ENCODE measurements at regions of chr7 and their contacts with region 1.

Region 1: DNA sequence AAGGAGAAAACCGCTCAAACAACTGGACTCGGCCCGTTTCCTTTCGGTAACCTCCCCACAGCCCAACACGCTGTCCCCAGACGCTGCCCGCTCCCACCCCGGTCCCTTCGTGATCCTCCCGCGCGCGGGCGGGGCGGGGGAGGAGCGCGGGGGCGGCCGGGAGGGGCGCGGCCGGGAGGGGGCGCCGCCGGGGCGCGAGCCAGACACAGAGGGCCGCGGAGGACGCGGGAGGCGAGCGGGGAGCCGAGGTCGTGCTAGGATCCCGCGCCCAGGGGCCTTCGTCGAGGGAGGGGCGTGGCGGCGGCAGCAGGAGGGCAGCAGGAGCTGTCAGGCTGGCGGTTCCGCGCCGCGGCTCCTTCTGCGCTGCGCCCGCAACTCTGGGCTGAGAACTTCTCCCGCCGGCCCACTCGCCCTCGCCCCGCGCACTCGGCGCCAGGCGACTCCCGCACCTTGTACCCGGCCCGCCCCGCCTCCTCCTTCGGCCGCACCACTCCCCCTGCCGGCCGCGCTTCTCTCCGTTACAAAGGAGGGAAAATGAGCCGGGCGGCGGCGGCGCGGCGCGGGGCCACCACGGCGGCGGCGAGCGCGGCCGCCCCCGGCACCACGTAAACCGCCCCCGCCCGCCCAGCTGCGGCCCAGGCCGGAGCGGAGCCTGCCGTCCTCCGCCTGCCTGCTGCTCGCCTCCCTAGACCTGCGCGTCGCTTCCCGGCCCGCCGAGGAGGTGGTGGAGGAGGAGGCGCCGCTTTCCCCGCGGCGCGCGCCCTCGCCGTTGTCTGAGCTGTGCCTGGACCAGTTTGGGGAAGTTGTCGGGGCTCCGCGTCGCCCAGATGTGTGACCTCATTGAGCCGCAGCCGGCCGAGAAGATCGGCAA is at the start of gene CDK14:
- DNase-seq: peak; percentile 93
- ATAC-seq: peak; percentile 68
- H3K4me3 ChIP-seq: peak within 1 kb of the TSS; percentile 72 to 91 (median 84)
- H3K4me3 Mint-ChIP-seq: peak within 1 kb of the TSS; percentile 100
- H3K27ac ChIP-seq: peak within 1 kb of the TSS; percentile 79 to 93
- H3K27ac Mint-ChIP-seq: peak within 1 kb of the TSS; percentile 99
- H3K4me1 ChIP-seq: peaks cover 40 to 45% of the 10 kb centered on the region in 2 donors
- H3K4me1 Mint-ChIP-seq: peaks cover 58% of the 10 kb centered on the region
- H3K27me3 ChIP-seq: no peaks in the 10 kb centered on the region
- H3K27me3 Mint-ChIP-seq: no peaks in the 10 kb centered on the region
- CTCF ChIP-seq: peak; percentile 71
- total RNA-seq, gene CDK14: 167 and 174 TPM in 2 replicates

Region 2: DNA sequence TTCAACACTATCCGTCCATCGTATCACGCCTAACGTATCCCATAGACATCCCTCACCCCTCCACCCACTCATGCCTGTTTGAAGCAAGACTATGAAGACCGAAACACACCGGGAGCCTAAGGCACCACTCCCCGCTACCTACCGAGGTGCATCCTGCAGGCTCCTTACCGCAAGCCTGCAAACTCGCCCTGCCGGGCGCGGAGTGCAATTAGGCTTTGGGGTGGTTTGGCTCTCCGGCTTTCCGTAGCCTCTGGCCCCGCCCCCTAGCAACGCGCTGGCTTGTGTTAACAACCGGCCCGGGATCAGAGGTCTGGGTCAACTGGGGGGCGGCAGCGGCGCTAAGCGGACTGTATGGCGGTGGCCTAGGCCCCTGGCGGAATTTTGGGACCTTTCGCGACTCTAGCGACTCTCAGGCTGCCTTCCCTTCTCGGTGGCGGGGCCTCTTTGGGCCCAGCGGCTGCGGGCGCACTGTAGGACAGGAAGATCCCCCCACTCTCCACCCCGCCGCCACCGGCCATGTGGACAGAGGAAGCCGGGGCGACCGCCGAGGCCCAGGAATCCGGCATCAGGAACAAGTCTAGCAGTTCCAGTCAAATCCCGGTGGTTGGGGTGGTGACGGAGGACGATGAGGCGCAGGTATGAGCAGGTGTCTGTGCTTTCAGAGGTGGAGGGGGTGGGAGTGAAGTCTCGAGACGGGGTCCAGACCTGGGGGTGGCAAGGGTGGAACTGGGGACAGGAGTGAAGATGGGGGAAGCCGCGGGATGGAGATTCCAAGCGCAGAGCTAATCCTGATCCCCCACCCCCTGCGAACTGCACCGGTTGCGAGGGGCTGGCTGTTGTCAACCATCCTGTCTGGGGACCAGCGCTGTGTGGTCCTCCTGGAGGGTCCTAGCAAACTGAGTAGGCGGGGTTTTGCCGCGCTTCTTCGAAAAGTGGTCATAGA is 350.9 kb before region 1 on chr7 and contains the start of gene CFAP69:
- CTCF ChIA-PET with region 1: no interaction called
- POLR2A ChIA-PET with region 1: no interaction called
- intact Hi-C with region 1: loop called (anchors 10 kb)
- DNase-seq: peak; percentile 88
- ATAC-seq: peak; percentile 90
- H3K4me3 ChIP-seq: peak within 1 kb of the TSS; percentile 30 to 86 (median 69)
- H3K4me3 Mint-ChIP-seq: peak within 1 kb of the TSS; percentile 91
- H3K27ac ChIP-seq: peak within 1 kb of the TSS in 1 of 2 donors; percentile 37
- H3K27ac Mint-ChIP-seq: peak within 1 kb of the TSS; percentile 2
- H3K4me1 ChIP-seq: peaks cover 16 to 20% of the 10 kb centered on the region in 2 donors
- H3K4me1 Mint-ChIP-seq: peaks cover 28% of the 10 kb centered on the region
- H3K27me3 ChIP-seq: peaks cover 0 to 31% (median 26%) of the 10 kb centered on the region in 4 experiments
- H3K27me3 Mint-ChIP-seq: peaks cover 45% of the 10 kb centered on the region
- CTCF ChIP-seq: no peak
- total RNA-seq, gene CFAP69: 0.15 and 0.29 TPM in 2 replicates

Region 3: DNA sequence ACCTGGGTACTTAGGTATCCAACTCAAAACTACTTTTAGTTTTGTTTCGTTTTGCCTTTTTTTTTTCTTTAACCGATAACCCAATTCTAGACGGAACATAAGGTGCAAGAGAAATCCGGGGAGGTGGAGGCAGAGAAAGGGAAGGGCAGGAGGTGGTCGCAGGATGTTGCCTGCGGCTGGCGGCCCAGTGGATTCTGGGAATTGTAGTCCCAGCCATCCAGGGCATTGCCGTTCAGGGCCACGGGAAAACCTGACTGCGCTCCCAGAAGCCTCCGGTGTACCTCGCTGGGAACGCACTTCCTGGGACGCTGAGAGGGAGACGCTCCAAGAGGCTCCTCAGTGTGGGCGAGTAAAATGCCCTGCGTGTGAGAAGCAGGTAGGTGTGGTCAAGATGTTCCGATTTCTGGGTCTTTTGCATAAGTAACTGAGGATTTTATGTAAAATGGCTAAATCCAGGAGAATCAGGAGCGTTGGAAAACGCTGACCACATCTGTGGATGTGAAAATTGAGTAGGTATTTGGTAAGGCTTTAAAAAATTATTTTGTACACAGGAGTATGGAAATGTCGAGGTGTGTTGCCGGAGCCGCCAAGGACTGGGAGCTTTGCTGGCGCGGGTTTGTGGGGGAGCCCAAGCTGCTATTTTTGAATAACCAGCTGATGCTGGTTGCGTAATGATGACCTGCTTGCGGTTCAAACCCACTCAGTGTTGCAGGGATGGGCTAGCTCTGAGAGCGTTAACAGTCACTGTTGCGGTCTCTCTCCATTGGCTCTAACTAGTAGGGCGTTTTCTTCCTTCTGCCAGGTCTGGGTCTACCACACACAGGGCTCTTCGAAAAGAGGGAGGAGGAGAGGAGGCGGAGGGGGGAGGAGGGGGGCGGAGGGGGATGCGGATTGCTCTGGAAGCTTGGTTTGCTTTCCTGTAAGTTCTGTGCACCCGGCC is 192.6 kb before region 1 on chr7 and contains the start of gene CLDN12:
- CTCF ChIA-PET with region 1: no interaction called
- POLR2A ChIA-PET with region 1: no interaction called
- intact Hi-C with region 1: loop called (anchors 2 kb)
- DNase-seq: peak; percentile 90
- ATAC-seq: peak; percentile 96
- H3K4me3 ChIP-seq: peak within 1 kb of the TSS; percentile 65 to 98 (median 81)
- H3K4me3 Mint-ChIP-seq: peak within 1 kb of the TSS; percentile 99
- H3K27ac ChIP-seq: peak within 1 kb of the TSS; percentile 47 to 72
- H3K27ac Mint-ChIP-seq: peak within 1 kb of the TSS; percentile 98
- H3K4me1 ChIP-seq: peaks cover 5% of the 10 kb centered on the region in 2 donors
- H3K4me1 Mint-ChIP-seq: peaks cover 20% of the 10 kb centered on the region
- H3K27me3 ChIP-seq: no peaks in the 10 kb centered on the region
- H3K27me3 Mint-ChIP-seq: no peaks in the 10 kb centered on the region
- CTCF ChIP-seq: no peak
- total RNA-seq, gene CLDN12: 14.1 and 17.3 TPM in 2 replicates

Region 4: GRCh38 chr7:90552521-90552920 is 43.5 kb before region 1 on chr7:
- CTCF ChIA-PET with region 1: interaction called, 10 read pairs
- POLR2A ChIA-PET with region 1: no interaction called
- intact Hi-C with region 1: loop called (anchors 5 kb)
- DNase-seq: peak; percentile 44
- ATAC-seq: no peak
- H3K4me3 ChIP-seq: no peak overlapping the region
- H3K4me3 Mint-ChIP-seq: no peak overlapping the region
- H3K27ac ChIP-seq: no peak overlapping the region
- H3K27ac Mint-ChIP-seq: no peak overlapping the region
- H3K4me1 ChIP-seq: no peaks in the 10 kb centered on the region
- H3K4me1 Mint-ChIP-seq: peaks cover under 1% of the 10 kb centered on the region
- H3K27me3 ChIP-seq: peaks cover 0 to 5% (median 0%) of the 10 kb centered on the region in 4 experiments
- H3K27me3 Mint-ChIP-seq: peaks cover 4% of the 10 kb centered on the region
- CTCF ChIP-seq: peak; percentile 61

Region 5: DNA sequence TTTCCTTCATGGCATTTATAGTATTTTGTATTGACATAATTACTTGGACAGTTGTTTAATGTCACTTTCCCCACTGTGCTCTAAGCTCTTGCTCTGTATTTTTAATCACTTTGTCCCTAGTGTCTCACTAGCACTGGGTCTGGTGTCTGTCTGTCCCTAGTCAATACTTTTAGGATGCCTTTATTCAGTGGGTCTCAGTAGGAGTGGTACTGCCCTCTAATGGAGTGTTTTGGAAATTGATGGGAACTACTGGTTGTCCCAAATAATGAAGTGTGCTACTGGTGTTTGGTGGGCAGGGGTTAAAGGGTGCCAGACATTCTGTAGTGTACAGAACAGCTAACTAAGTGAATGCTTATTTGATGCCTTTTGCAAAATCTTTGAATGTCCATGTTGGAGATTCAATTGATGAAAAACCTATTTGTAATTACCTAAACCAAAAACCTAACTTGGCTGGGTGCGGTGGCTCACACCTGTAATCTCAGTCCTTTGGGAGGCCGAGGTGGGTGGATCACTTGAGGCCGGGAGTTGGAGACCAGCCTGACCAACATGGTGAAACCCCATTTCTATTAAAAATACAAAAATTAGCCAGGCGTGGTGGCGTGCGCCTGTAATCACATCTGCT is 33.4 kb after region 1 on chr7:
- CTCF ChIA-PET with region 1: interaction called, 53 read pairs
- POLR2A ChIA-PET with region 1: no interaction called
- intact Hi-C with region 1: loop called (anchors 1 kb)
- DNase-seq: peak; percentile 75
- ATAC-seq: peak; percentile 86
- H3K4me3 ChIP-seq: no peak overlapping the region
- H3K4me3 Mint-ChIP-seq: no peak overlapping the region
- H3K27ac ChIP-seq: no peak overlapping the region
- H3K27ac Mint-ChIP-seq: no peak overlapping the region
- H3K4me1 ChIP-seq: no peaks in the 10 kb centered on the region
- H3K4me1 Mint-ChIP-seq: peaks cover 13% of the 10 kb centered on the region
- H3K27me3 ChIP-seq: no peaks in the 10 kb centered on the region
- H3K27me3 Mint-ChIP-seq: no peaks in the 10 kb centered on the region
- CTCF ChIP-seq: peak; percentile 75

Measured in B cell (primary cell).